Ascending aorta (tissue), 2 donors: ENCODE measurements at regions of chr9 and their contacts with region 1.

Region 1: DNA sequence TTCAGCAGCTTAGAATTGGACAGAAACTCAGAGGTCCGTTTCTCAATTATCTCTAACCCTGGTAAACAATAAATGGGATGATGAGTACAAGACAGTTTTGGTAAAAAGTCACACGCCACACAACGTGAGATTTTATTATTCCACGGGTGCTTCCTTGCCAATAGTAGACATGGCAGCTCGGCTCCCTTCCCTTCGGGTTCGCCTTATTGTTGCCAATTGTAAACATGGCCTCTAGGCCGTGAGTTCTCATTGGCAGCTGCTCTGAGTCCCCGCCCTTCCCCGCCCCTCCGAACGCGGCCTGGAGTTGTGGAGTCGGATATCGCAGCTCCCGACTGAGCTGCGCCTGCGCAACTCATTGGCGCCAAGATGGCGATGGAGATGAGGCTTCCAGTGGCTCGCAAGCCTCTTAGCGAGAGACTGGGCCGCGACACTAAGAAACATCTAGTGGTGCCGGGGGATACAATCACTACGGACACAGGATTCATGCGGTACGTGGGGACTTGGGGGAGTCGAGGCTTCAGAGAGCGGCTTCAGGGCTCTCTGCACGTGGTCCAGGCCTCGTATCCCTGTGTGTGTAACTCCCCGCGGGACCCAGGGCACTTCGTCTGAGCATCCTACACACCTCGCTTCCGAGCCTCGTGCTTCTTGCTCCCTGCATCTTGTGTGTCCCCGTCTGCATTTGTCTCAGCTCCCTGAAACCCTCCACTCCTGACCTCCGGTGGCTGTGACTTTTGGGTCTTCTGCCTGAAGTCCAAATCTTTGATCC is at the start of gene EXOSC2:
- DNase-seq: peak; percentile 95 to 99
- H3K4me3 ChIP-seq: peak within 1 kb of the TSS; percentile 54 to 77
- H3K27ac ChIP-seq: peak within 1 kb of the TSS; percentile 15 to 37
- H3K4me1 ChIP-seq: peaks cover 0 to 14% of the 10 kb centered on the region in 2 donors
- H3K27me3 ChIP-seq: no peaks in the 10 kb centered on the region
- CTCF ChIP-seq: no peak
- total RNA-seq, gene EXOSC2: 20.6 TPM

Region 2: DNA sequence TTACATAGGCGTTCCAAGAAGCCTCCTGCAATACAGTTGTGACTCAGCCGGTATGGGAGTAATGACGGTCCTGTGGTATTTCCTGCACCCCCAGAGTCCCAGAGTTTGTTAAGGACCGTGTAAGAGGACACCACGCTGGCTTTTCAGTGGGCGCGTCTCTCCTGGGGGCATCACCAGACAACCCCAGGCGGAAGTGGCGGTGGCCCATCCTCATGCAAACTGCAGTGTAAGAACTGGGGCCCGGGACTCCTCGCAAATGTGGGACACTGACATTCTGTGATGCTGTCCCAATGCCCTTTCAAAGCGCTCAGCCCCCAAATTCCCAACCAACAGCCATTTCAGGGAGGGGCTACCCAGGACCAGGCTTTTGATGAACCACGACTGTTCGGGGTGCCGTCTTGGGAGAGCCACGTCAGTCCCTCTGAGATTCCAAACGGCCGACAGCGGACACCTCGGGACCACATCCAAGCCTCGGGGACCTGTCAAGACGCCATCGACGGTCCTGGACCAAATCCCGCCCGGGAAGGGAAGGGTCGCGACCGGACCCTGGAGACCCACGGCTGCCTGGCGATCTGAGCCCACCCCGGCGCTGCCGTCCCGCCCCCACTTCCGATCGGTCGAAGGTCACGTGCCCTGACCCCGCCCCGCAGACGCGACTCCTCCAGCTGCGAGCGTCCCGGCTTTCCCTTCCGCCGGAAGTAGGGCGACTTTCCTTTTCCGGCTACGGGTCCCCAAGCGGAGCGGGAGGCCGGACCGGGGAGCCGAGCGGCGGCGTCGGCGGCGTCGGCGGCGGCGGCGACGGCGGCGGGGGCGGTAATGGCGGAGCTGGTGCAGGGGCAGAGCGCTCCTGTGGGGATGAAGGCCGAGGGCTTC is 114.5 kb before region 1 on chr9 and contains the start of gene FUBP3:
- intact Hi-C with region 1: loop called (anchors 2 kb)
- DNase-seq: peak; percentile 68 to 96
- H3K4me3 ChIP-seq: peak within 1 kb of the TSS; percentile 67 to 99
- H3K27ac ChIP-seq: peak within 1 kb of the TSS; percentile 87 to 92
- H3K4me1 ChIP-seq: peaks cover 3 to 14% of the 10 kb centered on the region in 2 donors
- H3K27me3 ChIP-seq: no peaks in the 10 kb centered on the region
- CTCF ChIP-seq: no peak
- total RNA-seq, gene FUBP3: 14.5 TPM

Region 3: DNA sequence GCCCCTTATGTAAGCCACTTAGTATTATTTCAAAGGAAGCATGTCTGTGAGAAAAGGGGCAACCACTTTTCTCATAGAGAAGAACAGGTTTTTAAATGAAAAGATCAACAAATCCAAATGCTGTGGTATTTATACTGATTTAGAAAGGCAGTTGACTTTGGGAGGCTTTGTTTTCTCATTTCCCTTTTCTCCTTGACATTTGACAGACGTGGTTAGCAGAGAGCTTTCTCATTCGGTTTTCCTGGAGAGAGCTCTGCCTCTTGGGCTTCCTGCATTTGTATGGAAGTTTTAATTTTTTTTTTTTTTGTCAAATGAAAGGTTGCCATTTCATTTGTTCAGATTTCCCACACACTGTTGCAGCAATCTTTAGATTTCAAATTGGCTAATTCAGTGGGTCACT is 62.4 kb after region 1 on chr9:
- intact Hi-C with region 1: no loop called
- DNase-seq: no peak
- H3K4me3 ChIP-seq: no peak overlapping the region
- H3K27ac ChIP-seq: no peak overlapping the region
- H3K4me1 ChIP-seq: peaks cover 0 to 11% of the 10 kb centered on the region in 2 donors
- H3K27me3 ChIP-seq: no peaks in the 10 kb centered on the region
- CTCF ChIP-seq: no peak

Region 4: GRCh38 chr9:130847327-130848217 is 154.0 kb after region 1 on chr9:
- intact Hi-C with region 1: loop called (anchors 5 kb)
- DNase-seq: peak; percentile 53 to 93
- H3K4me3 ChIP-seq: peak overlapping the region; percentile 40 to 50
- H3K27ac ChIP-seq: peak overlapping the region; percentile 95 to 98
- H3K4me1 ChIP-seq: peaks cover 19 to 60% of the 10 kb centered on the region in 2 donors
- H3K27me3 ChIP-seq: no peaks in the 10 kb centered on the region
- CTCF ChIP-seq: peak in 2 of 3 experiments; percentile 26 to 29

Region 5: GRCh38 chr9:131125128-131126058 is 431.8 kb after region 1 on chr9 and contains the start of gene NUP214:
- intact Hi-C with region 1: loop called (anchors 10 kb)
- DNase-seq: peak; percentile 90 to 99
- H3K4me3 ChIP-seq: peak within 1 kb of the TSS; percentile 60 to 99
- H3K27ac ChIP-seq: peak within 1 kb of the TSS; percentile 76 to 89
- H3K4me1 ChIP-seq: peaks cover 8 to 14% of the 10 kb centered on the region in 2 donors
- H3K27me3 ChIP-seq: no peaks in the 10 kb centered on the region
- CTCF ChIP-seq: no peak
- total RNA-seq, gene NUP214: 234 TPM